HEK293T (cell line): ENCODE measurements at regions of chr17 and their contacts with region 1.

Region 1: DNA sequence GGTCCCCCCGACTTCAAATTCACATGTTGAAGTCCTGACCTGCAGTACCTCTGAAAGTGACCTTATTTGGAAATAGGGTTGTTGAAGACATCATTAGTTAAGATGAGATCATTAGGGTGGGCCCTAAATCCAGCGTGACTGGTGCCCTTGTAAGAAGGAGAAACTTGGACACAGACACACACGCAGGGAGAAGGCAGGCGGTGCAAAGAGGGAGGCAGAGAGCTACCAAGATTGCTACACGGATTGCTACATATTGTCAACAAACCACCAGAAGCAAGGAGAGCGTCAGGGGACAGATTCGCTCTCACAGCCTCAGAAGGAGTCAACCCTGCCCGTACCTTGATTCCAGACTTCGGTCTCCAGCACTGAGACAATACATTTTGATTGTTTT is 6.8 kb upstream of the WBP2 start:
- DNase-seq: no peak

Region 2: DNA sequence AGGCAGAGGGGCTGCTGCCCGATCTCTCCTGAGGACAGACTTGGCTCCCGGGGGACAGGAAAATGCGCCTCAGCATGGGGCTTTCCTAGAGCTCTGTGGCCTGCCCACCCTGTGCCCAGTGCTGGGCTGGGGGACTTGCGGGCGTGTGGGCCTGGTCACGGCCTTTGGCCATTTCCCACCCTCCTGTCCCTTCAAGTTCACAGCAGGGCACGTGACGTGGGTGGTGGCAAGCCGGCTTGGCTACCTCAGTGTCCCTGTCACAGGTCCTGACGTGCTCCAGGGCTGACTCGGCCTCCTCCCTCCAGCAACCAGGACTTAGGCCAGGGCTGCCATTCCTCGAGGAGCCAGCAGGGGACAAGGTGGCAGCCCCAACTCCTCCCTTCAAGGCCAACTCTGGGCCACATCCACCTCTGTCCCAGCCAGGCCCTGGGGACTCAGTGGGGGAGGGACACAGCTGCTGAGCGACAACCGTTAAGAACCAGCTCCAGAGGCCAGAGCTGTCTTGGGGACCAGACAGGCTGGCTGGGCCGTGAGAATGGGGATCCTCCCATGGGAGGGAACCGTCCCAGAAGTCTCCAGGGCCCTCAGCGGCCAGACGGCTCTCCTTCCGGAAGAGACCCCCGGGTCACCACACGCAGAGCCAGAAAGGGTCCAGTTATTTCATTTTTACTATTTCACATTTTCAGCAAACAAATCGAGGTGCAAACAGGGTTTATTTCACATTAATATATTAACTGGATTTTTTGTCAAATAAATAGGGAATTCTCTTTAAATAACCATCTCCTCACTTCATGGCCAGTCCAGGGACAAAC is 16.7 kb before region 1 on chr17:
- CTCF ChIA-PET with region 1: interaction called, 12 read pairs
- POLR2A ChIA-PET with region 1: interaction called, 4 read pairs
- DNase-seq: peak; percentile 88

Region 3: DNA sequence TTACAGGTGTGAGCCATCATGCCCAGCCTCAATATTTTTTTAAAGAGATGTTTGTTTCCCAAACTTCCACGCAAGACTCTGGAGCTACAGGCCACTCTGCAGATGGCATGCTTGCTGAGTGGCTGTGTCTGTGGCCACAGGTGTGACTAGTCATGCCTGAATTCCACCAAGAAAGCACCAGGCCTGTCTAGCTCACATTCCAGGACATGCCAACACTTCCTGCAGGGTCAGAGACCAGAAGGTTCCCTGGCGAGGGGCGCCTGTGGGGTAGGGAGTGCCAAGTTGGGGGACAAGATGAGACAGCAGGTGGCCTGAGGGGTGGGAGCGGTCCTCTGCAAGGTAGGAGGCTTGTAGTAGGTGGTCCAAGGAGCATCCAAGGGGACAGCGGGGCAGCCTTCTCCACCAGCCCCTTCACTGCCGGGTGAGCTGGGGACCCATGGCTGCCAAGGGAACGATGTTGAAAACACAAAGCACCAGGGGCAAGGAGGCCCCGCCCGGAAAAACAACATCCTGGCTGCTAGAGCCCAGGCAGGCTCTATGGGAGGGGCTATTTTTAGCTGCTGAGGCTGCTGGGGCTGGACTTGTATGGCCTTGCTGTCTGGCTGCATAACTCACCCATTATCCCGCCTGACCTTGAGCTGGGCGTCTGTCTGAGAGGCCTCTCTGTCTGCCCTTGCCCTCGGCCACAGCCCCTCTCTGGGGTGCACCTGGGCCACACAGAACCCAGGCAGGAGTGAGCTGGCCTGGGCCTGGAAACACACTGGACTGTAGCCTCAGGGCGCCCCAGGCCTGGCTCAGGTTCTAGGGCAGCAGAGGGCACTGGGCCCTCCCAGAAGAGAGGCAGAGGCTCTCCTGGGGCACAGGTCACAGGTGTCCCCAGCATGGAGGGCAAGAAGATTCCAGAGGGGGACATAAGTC is 10.8 kb after region 1 on chr17:
- CTCF ChIA-PET with region 1: interaction called, 33 read pairs
- POLR2A ChIA-PET with region 1: interaction called, 26 read pairs
- DNase-seq: no peak

Region 4: DNA sequence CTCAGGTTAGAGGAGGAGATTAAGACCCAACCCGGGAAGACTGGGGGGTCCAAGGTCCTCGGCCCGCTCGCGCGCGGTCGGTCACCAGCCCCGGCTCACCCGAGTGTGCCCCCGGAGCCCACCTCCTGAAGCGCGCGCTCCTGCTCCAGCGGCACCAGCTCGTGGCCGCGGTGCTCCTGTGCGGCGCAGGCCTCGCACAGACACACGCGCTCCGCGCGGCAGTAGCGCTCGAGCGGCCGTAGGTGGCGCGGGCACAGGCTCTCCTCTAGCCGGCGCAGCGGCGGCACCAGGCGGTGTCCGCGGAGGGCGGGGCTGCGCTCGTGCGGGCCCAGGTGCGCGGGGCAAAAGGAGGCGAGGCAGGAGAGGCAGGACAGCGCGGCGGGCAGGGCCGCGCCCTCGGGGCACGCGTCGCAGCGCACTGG is 15.8 kb after region 1 on chr17:
- CTCF ChIA-PET with region 1: interaction called, 33 read pairs
- POLR2A ChIA-PET with region 1: interaction called, 26 read pairs
- DNase-seq: peak; percentile 85

Region 5: GRCh38 chr17:75896415-75897159 is 34.7 kb after region 1 on chr17 and contains the start of gene TRIM65:
- CTCF ChIA-PET with region 1: interaction called, 13 read pairs
- POLR2A ChIA-PET with region 1: interaction called, 5 read pairs
- DNase-seq: peak; percentile 88

Region 6: GRCh38 chr17:75913537-75914210 is 51.8 kb after region 1 on chr17:
- CTCF ChIA-PET with region 1: no interaction called
- POLR2A ChIA-PET with region 1: no interaction called
- DNase-seq: no peak